ENCODE measurements at regions of chr17 and their contacts with region 1.

Region 1: GRCh38 chr17:2054512-2055291 is at the start of gene HIC1:
- DNase-seq: peak; percentile 73 to 88
- H3K4me3 ChIP-seq: peak within 1 kb of the TSS; percentile 73
- H3K4me3 Mint-ChIP-seq: peak within 1 kb of the TSS; percentile 76
- H3K27ac Mint-ChIP-seq: no peak within 1 kb of the TSS
- H3K4me1 ChIP-seq: peaks cover 5% of the 10 kb centered on the region
- H3K4me1 Mint-ChIP-seq: no peaks in the 10 kb centered on the region
- H3K27me3 ChIP-seq: no peaks in the 10 kb centered on the region
- H3K27me3 Mint-ChIP-seq: peaks cover 12% of the 10 kb centered on the region
- CTCF ChIP-seq: peak; percentile 63 to 96
- total RNA-seq, gene HIC1: 0.59 and 1.8 TPM in 2 replicates

Region 2: GRCh38 chr17:1516388-1517161 is 538.1 kb before region 1 on chr17 and contains the start of gene INPP5K:
- CTCF ChIA-PET with region 1: no interaction called
- POLR2A ChIA-PET with region 1: no interaction called
- intact Hi-C with region 1: no loop called
- DNase-seq: peak; percentile 98
- H3K4me3 ChIP-seq: peak within 1 kb of the TSS; percentile 93
- H3K4me3 Mint-ChIP-seq: peak within 1 kb of the TSS; percentile 86
- H3K27ac Mint-ChIP-seq: peak within 1 kb of the TSS; percentile 87
- H3K4me1 ChIP-seq: peaks cover 13% of the 10 kb centered on the region
- H3K4me1 Mint-ChIP-seq: peaks cover 15% of the 10 kb centered on the region
- H3K27me3 ChIP-seq: no peaks in the 10 kb centered on the region
- H3K27me3 Mint-ChIP-seq: no peaks in the 10 kb centered on the region
- CTCF ChIP-seq: no peak
- total RNA-seq, gene INPP5K: 24.1 and 27.3 TPM in 2 replicates

Region 3: DNA sequence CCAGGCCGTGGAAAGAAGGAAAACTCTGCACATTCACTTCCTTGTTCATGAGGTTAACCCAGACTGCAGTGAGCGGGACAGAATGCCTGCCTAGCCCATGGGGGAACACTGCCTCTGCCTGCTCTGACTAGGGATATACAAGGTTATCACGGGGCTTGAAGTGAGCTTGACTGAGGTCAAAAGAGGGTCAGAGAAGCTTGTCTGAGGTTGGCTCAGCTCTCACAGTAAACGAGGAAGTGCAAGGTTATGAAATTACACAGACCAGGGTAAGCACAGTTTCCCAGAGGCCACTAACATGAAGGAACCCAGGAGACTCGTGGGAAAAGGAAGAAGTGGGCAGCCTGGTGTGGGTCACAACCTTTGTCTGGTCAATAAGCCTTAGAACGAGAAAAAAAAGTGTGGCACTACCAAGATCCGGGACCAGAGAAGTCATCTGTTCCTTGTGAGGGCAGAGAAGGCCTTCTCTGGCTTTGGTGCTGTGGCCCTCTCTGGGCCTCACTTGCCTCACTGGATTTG is 29.0 kb after region 1 on chr17:
- CTCF ChIA-PET with region 1: interaction called, 13 read pairs
- POLR2A ChIA-PET with region 1: no interaction called
- intact Hi-C with region 1: no loop called
- DNase-seq: peak; percentile 38 to 54
- H3K4me3 ChIP-seq: no peak overlapping the region
- H3K4me3 Mint-ChIP-seq: no peak overlapping the region
- H3K27ac Mint-ChIP-seq: no peak overlapping the region
- H3K4me1 ChIP-seq: peaks cover 37% of the 10 kb centered on the region
- H3K4me1 Mint-ChIP-seq: peaks cover 39% of the 10 kb centered on the region
- H3K27me3 ChIP-seq: no peaks in the 10 kb centered on the region
- H3K27me3 Mint-ChIP-seq: no peaks in the 10 kb centered on the region
- CTCF ChIP-seq: no peak

Region 4: DNA sequence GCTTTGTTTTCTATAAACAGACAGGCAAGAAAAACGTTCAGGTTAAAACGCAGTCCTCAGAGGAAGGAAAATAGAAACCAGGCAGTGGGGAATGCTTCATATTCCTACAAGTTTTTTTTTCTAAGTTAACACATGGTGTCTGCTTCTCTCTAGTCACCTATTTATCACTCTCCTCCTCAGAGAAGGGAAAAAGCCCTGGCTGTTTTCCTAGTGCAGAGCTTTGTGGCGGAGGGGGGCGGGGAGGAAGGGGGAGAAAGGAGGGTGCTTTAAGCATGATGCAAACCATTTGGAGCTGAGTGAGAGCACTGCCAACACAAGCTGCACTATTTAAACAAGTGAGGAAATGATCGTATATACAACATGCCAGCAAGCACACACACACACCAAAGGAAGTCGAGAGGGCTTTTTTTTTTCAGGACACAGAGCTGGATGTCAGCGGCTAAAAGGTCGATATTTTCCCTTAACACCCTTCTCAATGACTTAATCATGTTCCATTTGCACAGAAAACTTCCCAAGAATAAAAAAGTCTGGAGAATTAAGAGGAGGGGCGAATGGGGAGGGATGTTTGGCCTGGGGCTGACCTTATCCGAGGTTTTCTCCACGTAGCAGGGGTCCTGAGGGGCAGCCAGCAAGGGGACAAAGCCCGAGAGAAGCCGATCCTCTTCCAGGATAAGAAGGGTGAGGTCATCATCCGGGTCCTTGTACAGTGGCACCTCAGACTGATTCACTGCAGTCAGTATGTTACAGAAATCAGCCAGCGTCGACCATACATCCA is 117.6 kb after region 1 on chr17:
- CTCF ChIA-PET with region 1: no interaction called
- POLR2A ChIA-PET with region 1: no interaction called
- intact Hi-C with region 1: loop called (anchors 5 kb)
- DNase-seq: no peak
- H3K4me3 ChIP-seq: no peak overlapping the region
- H3K4me3 Mint-ChIP-seq: no peak overlapping the region
- H3K27ac Mint-ChIP-seq: no peak overlapping the region
- H3K4me1 ChIP-seq: no peaks in the 10 kb centered on the region
- H3K4me1 Mint-ChIP-seq: no peaks in the 10 kb centered on the region
- H3K27me3 ChIP-seq: no peaks in the 10 kb centered on the region
- H3K27me3 Mint-ChIP-seq: no peaks in the 10 kb centered on the region
- CTCF ChIP-seq: no peak

Region 5: GRCh38 chr17:2233441-2233947 is 178.8 kb after region 1 on chr17:
- CTCF ChIA-PET with region 1: interaction called, 13 read pairs
- POLR2A ChIA-PET with region 1: interaction called, 3 read pairs
- intact Hi-C with region 1: no loop called
- DNase-seq: no peak
- H3K4me3 ChIP-seq: no peak overlapping the region
- H3K4me3 Mint-ChIP-seq: no peak overlapping the region
- H3K27ac Mint-ChIP-seq: no peak overlapping the region
- H3K4me1 ChIP-seq: no peaks in the 10 kb centered on the region
- H3K4me1 Mint-ChIP-seq: peaks cover 9% of the 10 kb centered on the region
- H3K27me3 ChIP-seq: no peaks in the 10 kb centered on the region
- H3K27me3 Mint-ChIP-seq: no peaks in the 10 kb centered on the region
- CTCF ChIP-seq: no peak

Region 6: GRCh38 chr17:2244545-2245525 is 190.1 kb after region 1 on chr17:
- CTCF ChIA-PET with region 1: interaction called, 57 read pairs
- POLR2A ChIA-PET with region 1: interaction called, 16 read pairs
- intact Hi-C with region 1: loop called (anchors 1 kb)
- DNase-seq: peak; percentile 71 to 78
- H3K4me3 ChIP-seq: no peak overlapping the region
- H3K4me3 Mint-ChIP-seq: no peak overlapping the region
- H3K27ac Mint-ChIP-seq: no peak overlapping the region
- H3K4me1 ChIP-seq: no peaks in the 10 kb centered on the region
- H3K4me1 Mint-ChIP-seq: no peaks in the 10 kb centered on the region
- H3K27me3 ChIP-seq: no peaks in the 10 kb centered on the region
- H3K27me3 Mint-ChIP-seq: no peaks in the 10 kb centered on the region
- CTCF ChIP-seq: peak; percentile 93 to 96

Region 7: GRCh38 chr17:2282297-2282873 is 227.7 kb after region 1 on chr17:
- CTCF ChIA-PET with region 1: interaction called, 3 read pairs
- POLR2A ChIA-PET with region 1: no interaction called
- intact Hi-C with region 1: loop called (anchors 10 kb)
- DNase-seq: peak in 1 of 2 experiments; percentile 69
- H3K4me3 ChIP-seq: no peak overlapping the region
- H3K4me3 Mint-ChIP-seq: no peak overlapping the region
- H3K27ac Mint-ChIP-seq: no peak overlapping the region
- H3K4me1 ChIP-seq: no peaks in the 10 kb centered on the region
- H3K4me1 Mint-ChIP-seq: no peaks in the 10 kb centered on the region
- H3K27me3 ChIP-seq: no peaks in the 10 kb centered on the region
- H3K27me3 Mint-ChIP-seq: no peaks in the 10 kb centered on the region
- CTCF ChIP-seq: peak; percentile 52 to 58

Measured in Caco-2 (cell line).